Spleen (tissue), 13 donors: ENCODE measurements at regions of chr17 and their contacts with region 1.

Region 1: GRCh38 chr17:65064452-65065019 is 8.0 kb upstream of the GNA13 start:
- DNase-seq: no peak
- H3K4me3 ChIP-seq: no peak overlapping the region
- H3K27ac ChIP-seq: no peak overlapping the region
- H3K4me1 ChIP-seq: peaks cover 7 to 56% (median 22%) of the 10 kb centered on the region in 6 donors
- H3K27me3 ChIP-seq: no peaks in the 10 kb centered on the region
- CTCF ChIP-seq: no peak
- POLR2A ChIP-seq: no peak

Region 2: DNA sequence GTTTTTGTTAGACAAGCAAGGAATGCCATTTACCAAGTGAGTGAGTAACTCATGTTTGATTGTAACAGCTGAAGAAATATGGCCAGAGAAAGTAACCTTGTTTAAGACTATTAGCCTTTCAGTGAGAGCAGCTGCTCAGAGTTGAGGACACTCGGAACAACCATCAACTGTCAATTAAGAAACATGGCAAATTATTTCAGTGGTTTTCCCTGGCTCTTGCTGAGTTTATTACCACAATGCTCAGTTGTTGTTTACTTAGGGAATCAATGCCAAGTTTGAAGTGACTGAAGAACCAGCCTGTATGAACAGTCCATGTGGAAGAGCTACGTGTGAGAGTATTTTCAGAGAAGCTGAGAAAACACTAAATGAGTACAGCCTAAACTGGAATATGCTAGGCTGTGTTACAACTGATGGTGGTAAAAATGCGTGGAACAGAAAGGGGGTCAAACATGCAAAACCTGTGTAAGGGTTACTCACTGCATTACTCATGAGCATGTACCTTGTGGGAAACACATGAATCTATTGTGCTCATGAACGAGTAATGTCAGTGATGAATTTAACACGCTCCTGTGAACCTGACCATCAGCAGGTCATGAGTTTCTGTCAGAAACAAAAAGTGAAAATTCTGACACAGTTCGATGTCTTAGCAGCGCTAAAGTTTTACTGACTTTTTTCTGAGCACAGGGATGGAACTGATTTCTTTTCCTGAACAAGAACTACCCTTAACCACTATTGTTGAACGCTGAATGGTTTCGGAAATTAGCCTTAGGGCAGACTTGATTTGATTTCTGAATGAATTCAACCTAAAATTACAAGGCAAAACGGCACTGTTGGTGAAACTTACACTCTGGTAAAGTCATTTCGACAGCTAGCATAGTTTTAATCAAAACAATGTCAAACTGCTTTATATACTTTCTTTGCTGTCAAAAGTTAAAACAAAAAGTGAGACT is 41.5 kb before region 1 on chr17:
- intact Hi-C with region 1: no loop called
- DNase-seq: no peak
- H3K4me3 ChIP-seq: no peak overlapping the region
- H3K27ac ChIP-seq: peak overlapping the region in 7 of 8 donors; percentile 9 to 53 (median 46)
- H3K4me1 ChIP-seq: peaks cover 41 to 100% (median 97%) of the 10 kb centered on the region in 6 donors
- H3K27me3 ChIP-seq: no peaks in the 10 kb centered on the region
- CTCF ChIP-seq: no peak
- POLR2A ChIP-seq: no peak

Region 3: DNA sequence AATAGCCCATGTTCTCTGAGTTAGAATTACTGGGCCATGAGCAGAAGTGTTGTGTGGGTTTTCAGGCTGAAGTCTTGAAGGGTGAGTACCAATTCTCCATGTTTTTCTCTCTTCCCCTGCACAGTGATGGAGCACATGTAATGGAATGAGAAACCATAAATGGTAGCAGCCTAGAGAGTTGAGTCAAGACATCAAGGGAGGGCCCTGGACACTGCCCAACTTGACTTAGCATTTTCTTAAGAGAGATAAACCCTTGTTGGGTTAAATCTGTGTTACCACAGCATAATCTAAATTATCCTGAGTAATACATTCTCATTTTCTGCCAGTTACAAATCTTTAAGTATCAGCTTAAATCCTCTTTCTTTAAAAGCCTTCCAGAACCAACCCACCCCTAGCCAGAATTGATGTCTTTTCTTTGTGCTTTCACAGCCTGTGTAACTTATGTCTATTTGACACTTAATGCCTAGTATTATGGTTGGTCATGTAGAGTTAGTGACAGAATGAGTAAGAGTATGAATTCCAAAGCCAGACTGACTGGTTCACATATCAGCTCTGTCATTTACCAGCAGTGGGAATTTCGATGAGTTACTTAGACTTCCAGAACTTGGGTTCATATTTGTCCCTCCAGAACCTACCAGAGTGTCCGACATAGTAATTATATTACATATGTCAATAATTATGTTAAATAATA is 45.6 kb after region 1 on chr17:
- intact Hi-C with region 1: loop called (anchors 10 kb)
- DNase-seq: no peak
- H3K4me3 ChIP-seq: no peak overlapping the region
- H3K27ac ChIP-seq: no peak overlapping the region
- H3K4me1 ChIP-seq: peaks cover 0 to 18% (median 9%) of the 10 kb centered on the region in 6 donors
- H3K27me3 ChIP-seq: no peaks in the 10 kb centered on the region
- CTCF ChIP-seq: no peak
- POLR2A ChIP-seq: no peak

Region 4: GRCh38 chr17:65231662-65232335 is 167.3 kb after region 1 on chr17:
- intact Hi-C with region 1: no loop called
- DNase-seq: no peak
- H3K4me3 ChIP-seq: no peak overlapping the region
- H3K27ac ChIP-seq: no peak overlapping the region
- H3K4me1 ChIP-seq: peaks cover 13 to 26% (median 18%) of the 10 kb centered on the region in 6 donors
- H3K27me3 ChIP-seq: peaks cover 0 to 43% (median 0%) of the 10 kb centered on the region in 7 donors
- CTCF ChIP-seq: peak in 9 of 11 experiments; percentile 23 to 74 (median 52)
- POLR2A ChIP-seq: no peak